ENCODE measurements at regions of chr12 and their contacts with region 1.

Region 1: DNA sequence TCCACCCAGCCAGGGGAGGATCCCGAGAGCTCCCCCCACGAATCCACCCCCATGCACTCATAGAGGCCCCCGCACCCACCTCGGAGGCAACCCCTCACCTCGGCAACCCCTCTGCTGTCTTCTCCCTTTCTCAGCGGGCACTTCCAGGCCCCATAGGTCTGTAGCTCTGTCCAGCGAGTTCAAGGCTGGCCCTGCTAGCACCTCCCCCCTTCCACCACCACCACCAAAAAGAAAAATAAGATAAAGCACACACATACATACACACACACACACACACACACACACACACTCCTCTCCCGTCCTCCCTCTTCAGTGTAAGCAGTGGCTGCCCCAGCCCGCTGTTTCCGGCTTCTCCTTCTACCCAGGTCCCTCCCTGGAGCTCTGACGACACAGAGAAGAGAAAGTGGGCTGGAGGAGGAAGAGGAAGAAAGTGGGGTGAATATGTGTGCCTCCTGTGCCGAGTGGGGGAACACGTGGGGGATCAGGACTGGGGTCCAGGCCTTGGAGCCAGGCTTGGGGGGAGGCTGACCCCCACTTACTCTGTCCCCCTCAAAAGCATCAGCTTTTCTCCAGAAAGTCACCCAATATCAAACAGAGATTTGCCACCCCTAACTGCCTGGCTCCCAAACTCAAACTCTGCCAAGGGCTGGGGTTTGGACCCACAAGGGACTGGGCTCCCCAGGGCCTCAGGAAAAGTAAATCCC is at the start of gene STAT6:
- DNase-seq: peak; percentile 92
- ATAC-seq: peak; percentile 60
- H3K4me3 ChIP-seq: peak within 1 kb of the TSS; percentile 87 to 100 (median 100)
- H3K4me3 Mint-ChIP-seq: peak within 1 kb of the TSS; percentile 99
- H3K27ac ChIP-seq: peak within 1 kb of the TSS; percentile 96 to 100
- H3K27ac Mint-ChIP-seq: peak within 1 kb of the TSS; percentile 98
- H3K4me1 ChIP-seq: peaks cover 20 to 40% of the 10 kb centered on the region in 2 donors
- H3K4me1 Mint-ChIP-seq: peaks cover 43% of the 10 kb centered on the region
- H3K27me3 ChIP-seq: no peaks in the 10 kb centered on the region
- H3K27me3 Mint-ChIP-seq: no peaks in the 10 kb centered on the region
- CTCF ChIP-seq: no peak
- total RNA-seq, gene STAT6: 704 and 736 TPM in 2 replicates

Region 2: DNA sequence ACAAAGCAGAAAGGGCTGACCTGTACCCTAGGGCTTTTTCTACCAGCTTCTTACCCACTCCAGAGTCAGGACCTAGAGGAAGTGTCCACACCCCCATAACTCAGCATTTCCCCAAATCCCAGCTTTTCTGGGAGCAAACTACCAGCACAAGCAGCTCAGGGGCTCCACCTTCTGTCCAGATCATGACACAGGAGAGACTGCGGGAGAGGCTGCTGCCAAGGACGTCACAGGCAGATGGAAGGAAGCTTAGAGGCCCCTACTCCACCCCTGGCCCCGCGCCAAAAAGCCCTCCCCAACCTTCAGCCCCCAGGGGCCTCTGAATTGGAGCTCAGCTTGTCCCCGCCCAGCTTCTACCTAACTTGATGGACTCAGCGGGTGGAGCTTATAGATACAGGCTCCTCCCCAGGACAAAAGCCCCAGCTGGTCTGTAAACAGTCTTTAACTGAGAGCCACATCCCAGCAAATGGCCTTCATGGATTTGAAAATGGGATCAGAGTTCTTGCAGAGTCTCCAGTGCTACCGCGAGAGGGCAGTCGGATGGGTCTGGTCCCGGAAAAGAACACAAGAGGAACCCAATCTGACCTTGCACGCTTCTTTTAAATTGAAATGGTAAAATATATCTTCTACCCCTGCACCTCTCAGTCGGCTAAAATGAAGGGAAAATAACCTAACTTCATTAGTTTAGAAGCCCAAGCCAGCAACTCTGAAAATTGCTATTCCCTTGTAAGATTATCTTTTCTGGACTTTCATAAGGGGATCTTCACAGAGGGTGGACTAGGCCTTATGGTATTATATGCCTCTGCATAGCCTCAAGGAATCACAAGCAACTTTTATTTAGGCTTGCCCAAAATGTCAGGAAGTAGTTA is 474.3 kb before region 1 on chr12:
- CTCF ChIA-PET with region 1: interaction called, 16 read pairs
- POLR2A ChIA-PET with region 1: interaction called, 3 read pairs
- intact Hi-C with region 1: no loop called
- DNase-seq: peak; percentile 98
- ATAC-seq: peak; percentile 69
- H3K4me3 ChIP-seq: peak overlapping the region; percentile 57 to 85 (median 78)
- H3K4me3 Mint-ChIP-seq: peak overlapping the region; percentile 89
- H3K27ac ChIP-seq: peak overlapping the region; percentile 75 to 83
- H3K27ac Mint-ChIP-seq: peak overlapping the region; percentile 95
- H3K4me1 ChIP-seq: peaks cover 46 to 53% of the 10 kb centered on the region in 2 donors
- H3K4me1 Mint-ChIP-seq: peaks cover 59% of the 10 kb centered on the region
- H3K27me3 ChIP-seq: no peaks in the 10 kb centered on the region
- H3K27me3 Mint-ChIP-seq: no peaks in the 10 kb centered on the region
- CTCF ChIP-seq: peak; percentile 70

Region 3: GRCh38 chr12:56759263-56759908 is 351.8 kb before region 1 on chr12:
- CTCF ChIA-PET with region 1: interaction called, 38 read pairs
- POLR2A ChIA-PET with region 1: interaction called, 3 read pairs
- intact Hi-C with region 1: loop called (anchors 1 kb)
- DNase-seq: no peak
- ATAC-seq: no peak
- H3K4me3 ChIP-seq: no peak overlapping the region
- H3K4me3 Mint-ChIP-seq: no peak overlapping the region
- H3K27ac ChIP-seq: no peak overlapping the region
- H3K27ac Mint-ChIP-seq: no peak overlapping the region
- H3K4me1 ChIP-seq: no peaks in the 10 kb centered on the region
- H3K4me1 Mint-ChIP-seq: peaks cover 1% of the 10 kb centered on the region
- H3K27me3 ChIP-seq: no peaks in the 10 kb centered on the region
- H3K27me3 Mint-ChIP-seq: no peaks in the 10 kb centered on the region
- CTCF ChIP-seq: no peak

Region 4: GRCh38 chr12:56931474-56931978 is 179.7 kb before region 1 on chr12:
- CTCF ChIA-PET with region 1: no interaction called
- POLR2A ChIA-PET with region 1: no interaction called
- intact Hi-C with region 1: no loop called
- DNase-seq: peak; percentile 51
- ATAC-seq: no peak
- H3K4me3 ChIP-seq: no peak overlapping the region
- H3K4me3 Mint-ChIP-seq: no peak overlapping the region
- H3K27ac ChIP-seq: no peak overlapping the region
- H3K27ac Mint-ChIP-seq: no peak overlapping the region
- H3K4me1 ChIP-seq: peaks cover 4 to 7% of the 10 kb centered on the region in 2 donors
- H3K4me1 Mint-ChIP-seq: peaks cover 5% of the 10 kb centered on the region
- H3K27me3 ChIP-seq: peaks cover 0 to 12% (median 0%) of the 10 kb centered on the region in 4 experiments
- H3K27me3 Mint-ChIP-seq: peaks cover 16% of the 10 kb centered on the region
- CTCF ChIP-seq: no peak

Region 5: DNA sequence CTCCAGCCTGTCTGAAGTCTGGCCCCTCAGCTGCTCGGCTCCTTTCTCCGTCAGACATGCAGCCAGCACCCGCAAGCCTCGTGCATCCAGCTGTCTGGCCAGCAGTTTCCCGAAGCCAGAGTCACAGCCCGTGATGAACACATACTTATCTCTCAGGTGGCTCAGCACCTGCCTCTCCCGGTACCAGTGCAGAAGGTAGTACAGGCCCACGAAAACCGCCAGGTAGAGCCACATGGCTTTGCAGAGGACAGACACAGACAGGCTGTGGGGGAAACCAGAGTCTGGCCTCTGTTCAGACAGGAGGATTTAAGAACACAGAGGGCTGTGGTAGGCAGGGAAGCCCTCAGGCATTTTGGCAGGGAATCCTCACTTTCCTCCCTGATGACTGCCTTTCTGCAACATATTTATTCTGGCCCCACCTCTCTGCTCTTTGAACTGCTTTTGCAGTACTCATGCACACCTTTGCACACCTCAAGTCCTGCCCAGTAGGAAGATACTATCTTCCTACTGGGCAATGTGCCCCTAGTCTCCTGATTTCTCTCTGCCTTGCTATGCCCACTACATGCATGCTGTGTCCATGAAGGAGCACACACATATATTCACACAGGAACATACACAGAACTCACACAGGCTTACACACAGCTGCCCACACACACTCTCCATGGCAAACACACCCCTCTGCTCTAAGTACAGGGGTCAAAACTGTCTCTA is 153.8 kb before region 1 on chr12 and contains the start of gene RDH16:
- CTCF ChIA-PET with region 1: no interaction called
- POLR2A ChIA-PET with region 1: no interaction called
- intact Hi-C with region 1: no loop called
- DNase-seq: no peak
- ATAC-seq: no peak
- H3K4me3 ChIP-seq: no peak within 1 kb of the TSS
- H3K4me3 Mint-ChIP-seq: no peak within 1 kb of the TSS
- H3K27ac ChIP-seq: no peak within 1 kb of the TSS
- H3K27ac Mint-ChIP-seq: no peak within 1 kb of the TSS
- H3K4me1 ChIP-seq: no peaks in the 10 kb centered on the region
- H3K4me1 Mint-ChIP-seq: no peaks in the 10 kb centered on the region
- H3K27me3 ChIP-seq: peaks cover 0 to 9% (median 0%) of the 10 kb centered on the region in 4 experiments
- H3K27me3 Mint-ChIP-seq: peaks cover 10% of the 10 kb centered on the region
- CTCF ChIP-seq: no peak
- total RNA-seq, gene RDH16: 1.5 and 2.4 TPM in 2 replicates

Region 6: DNA sequence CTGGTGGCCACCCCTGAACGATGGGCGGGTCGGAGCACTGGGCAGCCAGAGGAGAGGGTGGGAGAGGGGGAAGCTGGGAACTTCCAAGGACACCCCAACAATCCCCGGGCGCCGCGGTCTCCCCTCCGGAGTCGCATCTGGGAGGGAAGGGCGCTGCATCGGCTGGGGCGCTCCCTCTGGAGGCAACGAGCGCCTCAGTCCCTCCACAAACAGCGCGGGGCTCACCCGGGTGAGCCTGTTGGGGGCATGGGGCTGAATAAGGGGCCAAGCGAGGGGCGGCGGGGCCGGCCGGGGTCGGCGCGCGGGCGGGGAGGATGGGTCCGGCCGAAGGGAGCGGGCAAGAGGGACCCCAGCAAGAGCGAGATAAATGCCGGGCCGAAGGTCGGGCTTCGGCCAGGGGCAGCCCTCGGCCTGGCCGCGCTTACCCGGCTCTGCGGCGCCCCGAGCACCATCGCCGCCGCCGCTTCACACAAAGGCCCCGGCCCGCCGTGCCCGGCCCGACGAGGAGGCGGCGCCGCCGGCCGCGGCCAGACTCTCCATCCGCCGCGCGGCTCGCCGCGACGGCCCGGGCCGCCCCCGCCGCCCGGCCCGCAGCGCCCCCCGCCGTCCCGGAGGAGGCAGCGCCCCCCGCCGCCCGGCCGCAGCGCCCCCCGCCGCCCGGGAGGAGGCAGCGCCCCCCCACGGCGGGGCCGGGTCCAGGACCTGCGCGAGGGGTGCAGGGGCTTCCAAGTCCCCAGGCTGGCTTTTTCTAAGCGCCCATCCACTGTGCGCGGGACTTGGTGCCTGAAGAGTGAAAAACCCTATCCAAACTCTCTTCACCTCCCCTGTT is 105.0 kb before region 1 on chr12 and contains the start of gene ZBTB39:
- CTCF ChIA-PET with region 1: interaction called, 27 read pairs
- POLR2A ChIA-PET with region 1: interaction called, 5 read pairs
- intact Hi-C with region 1: loop called (anchors 1 kb)
- DNase-seq: peak; percentile 84
- ATAC-seq: peak; percentile 92
- H3K4me3 ChIP-seq: peak within 1 kb of the TSS; percentile 39 to 87 (median 70)
- H3K4me3 Mint-ChIP-seq: peak within 1 kb of the TSS; percentile 91
- H3K27ac ChIP-seq: peak within 1 kb of the TSS; percentile 43 to 86
- H3K27ac Mint-ChIP-seq: peak within 1 kb of the TSS; percentile 93
- H3K4me1 ChIP-seq: peaks cover 16 to 21% of the 10 kb centered on the region in 2 donors
- H3K4me1 Mint-ChIP-seq: peaks cover 41% of the 10 kb centered on the region
- H3K27me3 ChIP-seq: no peaks in the 10 kb centered on the region
- H3K27me3 Mint-ChIP-seq: no peaks in the 10 kb centered on the region
- CTCF ChIP-seq: peak; percentile 61
- total RNA-seq, gene ZBTB39: 13.9 and 15.6 TPM in 2 replicates

Region 7: DNA sequence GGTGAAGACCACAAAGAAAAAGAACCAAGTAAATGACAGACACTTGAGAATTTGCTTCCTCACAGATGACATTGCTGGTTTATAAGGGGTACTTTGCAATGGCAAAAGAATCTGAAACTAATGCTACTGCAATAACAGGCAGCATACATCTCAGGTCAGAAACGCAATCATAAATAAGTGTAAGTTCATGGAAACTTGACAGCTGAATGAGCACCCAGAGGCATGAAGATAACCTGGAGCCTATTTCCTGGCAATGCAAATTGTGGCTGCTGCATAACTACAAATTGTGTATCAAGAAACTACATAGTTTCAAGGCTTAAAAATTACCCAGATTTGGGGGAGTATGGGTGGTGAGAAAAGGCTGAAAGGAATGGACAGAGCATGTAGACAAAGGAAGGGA is 52.7 kb before region 1 on chr12:
- CTCF ChIA-PET with region 1: interaction called, 99 read pairs
- POLR2A ChIA-PET with region 1: interaction called, 12 read pairs
- intact Hi-C with region 1: no loop called
- DNase-seq: peak; percentile 35
- ATAC-seq: peak; percentile 66
- H3K4me3 ChIP-seq: peak overlapping the region in 1 of 5 experiments; percentile 13
- H3K4me3 Mint-ChIP-seq: peak overlapping the region; percentile 70
- H3K27ac ChIP-seq: peak overlapping the region; percentile 22 to 60
- H3K27ac Mint-ChIP-seq: peak overlapping the region; percentile 77
- H3K4me1 ChIP-seq: peaks cover 30 to 47% of the 10 kb centered on the region in 2 donors
- H3K4me1 Mint-ChIP-seq: peaks cover 57% of the 10 kb centered on the region
- H3K27me3 ChIP-seq: no peaks in the 10 kb centered on the region
- H3K27me3 Mint-ChIP-seq: no peaks in the 10 kb centered on the region
- CTCF ChIP-seq: no peak

Region 8: DNA sequence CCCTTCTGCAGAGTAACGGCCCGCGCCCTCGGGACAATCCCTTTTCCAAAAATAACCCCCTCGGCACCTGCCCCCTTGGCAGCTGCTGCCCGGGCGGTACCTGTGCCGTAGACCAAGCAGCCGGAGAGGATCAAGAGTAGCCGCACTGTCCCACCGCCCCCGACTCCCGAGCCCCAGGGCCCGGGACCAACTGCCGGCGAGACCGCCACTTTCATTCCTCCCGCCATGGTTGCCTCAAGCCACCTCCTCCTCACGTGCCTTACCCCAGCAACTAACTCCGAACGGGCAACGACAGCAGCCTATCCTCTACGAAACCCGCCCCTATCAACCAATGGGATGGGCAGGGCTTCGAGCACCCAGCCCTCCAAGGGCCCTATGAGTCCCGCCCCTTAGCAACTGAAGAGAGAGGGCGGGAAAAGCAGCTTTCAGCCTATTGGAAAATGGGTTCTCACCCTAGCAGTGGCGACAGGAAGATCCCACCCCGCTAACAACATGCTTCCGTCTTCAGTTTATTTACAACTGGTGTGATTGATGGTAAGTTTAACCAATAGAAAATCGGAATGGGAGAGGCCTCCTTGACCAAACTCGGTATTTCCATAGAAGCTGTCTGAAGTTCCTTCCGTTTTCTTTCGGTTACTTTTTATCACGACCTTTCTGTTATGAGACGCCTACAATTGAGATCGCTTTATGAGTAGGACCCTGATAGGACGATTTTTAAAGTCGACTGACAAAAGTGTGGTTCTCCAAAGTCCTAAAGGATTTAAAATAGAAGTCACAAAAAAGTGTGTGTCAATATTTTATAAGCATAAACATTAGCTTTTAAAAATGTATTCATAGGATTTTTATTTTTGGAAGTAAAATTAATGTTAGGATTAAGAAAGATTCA is 32.4 kb before region 1 on chr12 and contains the start of gene NEMP1:
- CTCF ChIA-PET with region 1: interaction called, 420 read pairs
- POLR2A ChIA-PET with region 1: interaction called, 57 read pairs
- intact Hi-C with region 1: loop called (anchors 2 kb)
- DNase-seq: peak; percentile 99
- ATAC-seq: peak; percentile 97
- H3K4me3 ChIP-seq: peak within 1 kb of the TSS; percentile 55 to 97 (median 87)
- H3K4me3 Mint-ChIP-seq: peak within 1 kb of the TSS; percentile 89
- H3K27ac ChIP-seq: peak within 1 kb of the TSS; percentile 75 to 89
- H3K27ac Mint-ChIP-seq: peak within 1 kb of the TSS; percentile 84
- H3K4me1 ChIP-seq: peaks cover 7 to 18% of the 10 kb centered on the region in 2 donors
- H3K4me1 Mint-ChIP-seq: peaks cover 24% of the 10 kb centered on the region
- H3K27me3 ChIP-seq: no peaks in the 10 kb centered on the region
- H3K27me3 Mint-ChIP-seq: no peaks in the 10 kb centered on the region
- CTCF ChIP-seq: no peak
- total RNA-seq, gene NEMP1: 35.0 and 40.1 TPM in 2 replicates

Region 9: GRCh38 chr12:57124259-57124877 is 13.2 kb after region 1 on chr12:
- CTCF ChIA-PET with region 1: interaction called, 72 read pairs
- POLR2A ChIA-PET with region 1: interaction called, 14 read pairs
- intact Hi-C with region 1: no loop called
- DNase-seq: peak; percentile 84
- ATAC-seq: peak; percentile 67
- H3K4me3 ChIP-seq: no peak overlapping the region
- H3K4me3 Mint-ChIP-seq: peak overlapping the region; percentile 9
- H3K27ac ChIP-seq: no peak overlapping the region
- H3K27ac Mint-ChIP-seq: no peak overlapping the region
- H3K4me1 ChIP-seq: peaks cover 13 to 21% of the 10 kb centered on the region in 2 donors
- H3K4me1 Mint-ChIP-seq: peaks cover 7% of the 10 kb centered on the region
- H3K27me3 ChIP-seq: peaks cover 0 to 9% (median 1%) of the 10 kb centered on the region in 4 experiments
- H3K27me3 Mint-ChIP-seq: peaks cover 3% of the 10 kb centered on the region
- CTCF ChIP-seq: peak; percentile 96

Region 10: DNA sequence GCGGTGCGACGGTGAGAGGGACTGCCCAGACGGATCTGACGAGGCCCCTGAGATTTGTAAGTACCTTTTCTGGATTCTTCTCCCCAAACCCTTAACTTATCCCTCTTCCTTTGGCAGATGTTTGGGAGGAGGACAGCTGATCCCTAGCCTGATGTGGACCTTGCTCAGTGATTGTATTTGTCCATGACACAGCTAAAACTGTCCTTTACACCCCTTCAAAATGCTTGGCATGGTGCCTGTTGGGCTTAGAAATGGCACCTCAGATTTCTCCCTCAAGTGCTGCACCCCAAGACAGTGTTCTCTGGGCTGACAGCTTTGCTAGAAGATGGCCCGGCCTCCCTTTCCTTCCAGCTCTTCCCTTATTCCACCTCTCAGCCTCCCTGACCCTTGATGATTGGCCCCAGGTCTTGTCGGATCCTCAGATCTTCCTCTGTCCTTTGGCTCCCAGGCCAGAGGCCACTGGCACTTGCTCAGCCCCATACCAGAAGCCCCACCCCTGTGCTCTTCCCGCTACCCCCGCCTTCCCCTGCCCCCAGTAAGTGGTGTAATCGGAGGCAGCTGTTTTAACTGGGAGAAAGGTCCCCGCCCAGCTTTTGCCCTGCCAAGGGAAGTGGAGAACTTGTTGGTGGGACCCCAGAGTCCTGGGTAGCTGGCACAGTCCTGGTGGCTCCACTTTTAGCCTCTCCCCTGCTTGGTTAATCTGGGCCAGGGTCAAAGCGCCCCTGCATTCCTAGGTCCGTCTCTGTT is 27.5 kb after region 1 on chr12:
- CTCF ChIA-PET with region 1: no interaction called
- POLR2A ChIA-PET with region 1: no interaction called
- intact Hi-C with region 1: no loop called
- DNase-seq: no peak
- ATAC-seq: no peak
- H3K4me3 ChIP-seq: no peak overlapping the region
- H3K4me3 Mint-ChIP-seq: no peak overlapping the region
- H3K27ac ChIP-seq: no peak overlapping the region
- H3K27ac Mint-ChIP-seq: no peak overlapping the region
- H3K4me1 ChIP-seq: no peaks in the 10 kb centered on the region
- H3K4me1 Mint-ChIP-seq: no peaks in the 10 kb centered on the region
- H3K27me3 ChIP-seq: no peaks in the 10 kb centered on the region
- H3K27me3 Mint-ChIP-seq: no peaks in the 10 kb centered on the region
- CTCF ChIP-seq: no peak

Region 11: GRCh38 chr12:57368349-57369095 is 257.3 kb after region 1 on chr12:
- CTCF ChIA-PET with region 1: no interaction called
- POLR2A ChIA-PET with region 1: no interaction called
- intact Hi-C with region 1: no loop called
- DNase-seq: no peak
- ATAC-seq: no peak
- H3K4me3 ChIP-seq: no peak overlapping the region
- H3K4me3 Mint-ChIP-seq: no peak overlapping the region
- H3K27ac ChIP-seq: no peak overlapping the region
- H3K27ac Mint-ChIP-seq: no peak overlapping the region
- H3K4me1 ChIP-seq: no peaks in the 10 kb centered on the region
- H3K4me1 Mint-ChIP-seq: no peaks in the 10 kb centered on the region
- H3K27me3 ChIP-seq: no peaks in the 10 kb centered on the region
- H3K27me3 Mint-ChIP-seq: no peaks in the 10 kb centered on the region
- CTCF ChIP-seq: no peak

Measured in B cell (primary cell).